ENCODE measurements at regions of chr15 and their contacts with region 1.

Region 1: DNA sequence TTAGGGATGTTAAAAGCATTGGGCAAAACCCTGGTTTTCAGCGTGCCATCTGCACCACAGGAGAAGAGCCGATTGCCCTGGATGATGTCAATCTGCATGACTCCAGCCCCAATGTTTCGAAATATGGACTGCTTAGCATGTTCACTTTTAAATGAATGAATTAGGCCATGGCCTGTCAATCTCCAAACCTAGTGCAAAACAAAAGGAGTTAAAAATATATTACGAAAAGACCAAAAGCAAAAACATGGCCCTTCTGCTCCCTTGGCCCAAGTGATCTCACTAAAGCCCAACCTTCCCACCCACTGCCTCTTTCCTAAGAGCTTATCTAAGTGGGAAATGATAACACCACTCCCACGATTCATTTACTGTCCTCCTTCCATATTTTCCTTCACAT is 107.5 kb downstream of the GLDN start:
- DNase-seq: no peak
- ATAC-seq: no peak
- H3K4me3 Mint-ChIP-seq: no peak overlapping the region
- H3K27ac Mint-ChIP-seq: no peak overlapping the region
- H3K4me1 Mint-ChIP-seq: no peaks in the 10 kb centered on the region
- H3K27me3 Mint-ChIP-seq: no peaks in the 10 kb centered on the region

Region 2: DNA sequence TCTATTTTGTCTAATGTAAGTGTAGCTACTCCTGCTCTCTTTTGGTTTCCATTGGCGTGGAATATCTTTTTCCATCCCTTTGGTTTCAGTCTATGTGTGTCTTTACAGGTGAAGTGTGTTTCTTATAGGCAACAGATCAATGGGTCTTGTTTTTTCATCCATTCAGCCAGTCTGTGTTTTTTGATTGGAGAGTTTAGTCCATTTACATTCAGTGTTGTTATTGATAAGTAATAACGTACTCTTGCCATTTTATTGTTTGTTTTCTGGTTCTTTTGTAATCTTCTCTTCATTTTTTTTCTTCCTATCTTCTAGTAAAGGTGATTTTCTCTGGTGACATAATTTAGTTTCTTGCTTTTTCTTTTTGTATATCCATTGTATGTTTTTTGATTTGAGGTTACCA is 10.5 kb before region 1 on chr15:
- CTCF ChIA-PET with region 1: no interaction called
- POLR2A ChIA-PET with region 1: no interaction called
- intact Hi-C with region 1: loop called in 1 of 2 experiments (anchors 1 kb)
- DNase-seq: no peak
- ATAC-seq: no peak
- H3K4me3 Mint-ChIP-seq: no peak overlapping the region
- H3K27ac Mint-ChIP-seq: no peak overlapping the region
- H3K4me1 Mint-ChIP-seq: no peaks in the 10 kb centered on the region
- H3K27me3 Mint-ChIP-seq: peaks cover 5% of the 10 kb centered on the region

Region 3: DNA sequence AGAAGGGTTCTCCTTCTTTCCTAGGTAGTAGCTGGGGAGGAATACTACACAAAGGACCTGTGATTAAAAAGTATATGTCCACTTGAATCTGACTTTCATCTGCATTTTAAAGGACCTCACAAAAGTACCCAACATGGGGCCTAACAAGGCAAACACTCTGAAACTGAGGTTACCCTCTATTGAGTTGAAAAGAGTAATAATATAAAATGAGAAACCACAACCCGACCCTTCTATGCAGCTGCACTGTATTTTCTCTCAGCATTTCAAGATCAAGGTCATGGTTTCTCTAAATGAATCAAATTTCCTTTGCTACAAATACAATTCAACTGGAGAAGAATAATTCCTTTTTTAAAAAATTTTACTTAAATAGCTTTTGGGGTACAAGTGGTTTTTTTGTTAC is 67.3 kb after region 1 on chr15:
- CTCF ChIA-PET with region 1: no interaction called
- POLR2A ChIA-PET with region 1: no interaction called
- intact Hi-C with region 1: no loop called
- DNase-seq: no peak
- ATAC-seq: no peak
- H3K4me3 Mint-ChIP-seq: no peak overlapping the region
- H3K27ac Mint-ChIP-seq: no peak overlapping the region
- H3K4me1 Mint-ChIP-seq: no peaks in the 10 kb centered on the region
- H3K27me3 Mint-ChIP-seq: no peaks in the 10 kb centered on the region

Region 4: DNA sequence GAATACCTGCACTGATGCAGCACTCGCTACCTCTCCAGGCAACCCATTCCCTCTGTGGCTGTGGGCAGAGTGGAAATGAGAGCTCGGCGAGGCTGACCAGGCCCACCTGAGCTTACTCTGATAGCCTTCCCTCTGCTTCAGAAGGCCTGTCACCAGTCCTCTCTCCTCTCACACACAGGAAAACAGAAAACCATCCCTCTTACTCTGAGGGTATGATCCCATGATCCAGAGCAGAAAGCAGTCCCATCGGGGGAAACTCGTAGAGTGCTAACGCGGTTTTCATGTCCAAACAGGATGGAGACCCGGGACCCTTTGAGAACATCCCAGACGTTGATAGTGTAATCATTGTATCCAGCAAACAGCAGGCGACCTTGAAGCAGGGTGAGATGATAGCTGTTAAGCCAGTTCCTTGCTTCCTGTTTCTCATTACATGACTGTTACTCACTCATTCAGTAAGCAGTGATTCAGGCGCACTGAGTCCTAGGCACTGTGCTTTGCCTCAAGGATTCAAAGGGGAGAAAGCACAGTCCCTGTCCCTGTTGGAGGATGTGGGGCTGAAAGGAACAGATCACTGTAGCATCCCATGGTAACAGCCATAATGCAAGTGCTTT is 675.4 kb after region 1 on chr15:
- CTCF ChIA-PET with region 1: no interaction called
- POLR2A ChIA-PET with region 1: no interaction called
- intact Hi-C with region 1: no loop called
- DNase-seq: peak; percentile 25
- ATAC-seq: peak; percentile 98
- H3K4me3 Mint-ChIP-seq: no peak overlapping the region
- H3K27ac Mint-ChIP-seq: peak overlapping the region; percentile 30
- H3K4me1 Mint-ChIP-seq: peaks cover 6% of the 10 kb centered on the region
- H3K27me3 Mint-ChIP-seq: no peaks in the 10 kb centered on the region

Measured in activated CD4-positive, alpha-beta T cell treated with anti-CD3 and anti-CD28 coated beads for 36 hours (primary cell).